SK-N-SH (cell line): ENCODE measurements at regions of chr13 and their contacts with region 1.

Region 1: DNA sequence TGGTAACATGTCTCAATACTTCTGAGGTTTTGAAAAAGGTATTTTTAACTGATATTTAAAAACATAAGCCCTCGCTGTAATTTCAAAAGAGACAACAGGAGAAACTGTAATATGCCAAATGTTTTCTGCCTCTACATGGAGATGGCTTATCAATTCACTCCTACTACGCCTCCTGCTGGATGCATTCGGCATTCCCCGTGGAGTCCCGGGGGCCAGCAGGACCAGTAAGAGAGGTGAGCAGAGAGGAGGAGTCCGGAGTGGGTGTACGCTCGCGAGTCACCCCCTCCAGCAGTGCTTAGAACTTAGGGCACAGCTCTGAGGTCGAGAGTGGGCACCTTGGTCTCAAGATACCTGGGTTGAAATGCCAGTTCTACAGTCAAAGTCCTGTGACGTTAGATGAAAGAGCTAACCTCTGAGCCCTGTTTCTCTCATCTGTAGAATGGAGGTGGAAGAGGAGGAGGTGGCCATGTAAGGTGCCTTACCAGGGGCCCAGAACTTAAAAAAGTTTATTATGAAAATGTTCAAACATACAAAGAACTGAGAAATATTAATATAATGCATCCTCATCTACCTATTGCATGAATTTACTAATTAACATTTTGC is 110.2 kb downstream of the STK24 start:
- DNase-seq: peak; percentile 68
- H3K4me3 ChIP-seq: peak overlapping the region in 1 of 2 experiments; percentile 28; a peak in 1 of 4 replicates
- H3K27ac ChIP-seq: no peak overlapping the region
- H3K4me1 ChIP-seq: peaks cover 0 to 19% of the 10 kb centered on the region in 2 experiments; a peak in 1 of 4 replicates
- H3K27me3 ChIP-seq: no peaks in the 10 kb centered on the region
- CTCF ChIP-seq: peak; percentile 75
- EP300 ChIP-seq: no peak
- RAD21 ChIP-seq: peak; percentile 50

Region 2: GRCh38 chr13:98454389-98454881 is 12.3 kb before region 1 on chr13:
- CTCF ChIA-PET with region 1: interaction called, 27 read pairs
- POLR2A ChIA-PET with region 1: no interaction called
- DNase-seq: no peak
- H3K4me3 ChIP-seq: no peak overlapping the region
- H3K27ac ChIP-seq: peak overlapping the region; percentile 39 to 68
- H3K4me1 ChIP-seq: peaks cover 8 to 17% of the 10 kb centered on the region in 2 experiments; a peak in 2 of 4 replicates
- H3K27me3 ChIP-seq: no peaks in the 10 kb centered on the region
- CTCF ChIP-seq: no peak
- EP300 ChIP-seq: no peak
- RAD21 ChIP-seq: no peak

Region 3: DNA sequence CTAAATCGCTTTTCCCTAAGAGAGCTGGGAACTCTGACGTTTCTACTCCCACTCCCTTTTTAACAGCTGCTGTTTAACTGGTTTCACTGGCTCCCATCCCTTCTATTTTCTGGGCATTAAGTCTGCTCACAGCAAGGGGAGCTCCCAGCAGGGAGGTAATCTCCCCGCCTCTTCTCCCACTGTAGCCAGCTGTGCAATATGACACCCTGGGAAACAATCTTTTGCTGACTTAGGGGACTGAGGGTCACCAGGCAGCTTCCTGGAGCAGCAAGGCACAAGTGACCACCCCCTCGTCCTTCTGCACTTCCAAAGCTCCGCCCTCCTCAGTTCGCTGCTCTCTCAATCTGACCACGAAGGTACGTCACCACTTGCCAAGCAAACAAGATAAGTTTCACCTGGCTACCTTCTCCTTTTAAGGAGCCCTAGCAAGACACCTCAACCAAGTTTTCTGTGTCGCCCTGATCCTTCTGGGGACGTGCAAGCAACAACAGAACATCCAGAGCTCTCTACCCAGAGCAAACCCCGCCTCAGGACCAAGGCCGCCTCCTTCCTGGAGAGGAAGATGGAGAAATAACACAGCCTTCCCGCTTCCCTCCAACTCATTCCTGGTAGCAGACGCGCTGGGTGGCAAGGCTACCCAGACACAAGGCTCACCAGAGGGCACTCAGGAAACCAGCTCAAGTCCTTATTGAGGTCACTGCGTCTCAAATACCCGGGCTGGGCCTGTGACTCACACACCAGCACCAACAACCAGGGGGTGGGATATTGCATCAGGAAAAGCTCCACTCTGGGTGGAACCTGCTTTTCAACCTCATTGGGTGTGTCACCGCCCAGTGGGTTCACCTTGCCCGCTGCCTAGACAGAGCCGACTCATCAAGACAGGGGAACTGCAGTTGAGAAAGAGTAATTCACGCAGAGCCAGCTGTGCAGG is 17.8 kb after region 1 on chr13:
- CTCF ChIA-PET with region 1: interaction called, 12 read pairs
- POLR2A ChIA-PET with region 1: no interaction called
- DNase-seq: no peak
- H3K4me3 ChIP-seq: peak overlapping the region in 1 of 2 experiments; percentile 8; a peak in 1 of 4 replicates
- H3K27ac ChIP-seq: peak overlapping the region; percentile 5 to 87; a peak in 3 of 4 replicates
- H3K4me1 ChIP-seq: peaks cover 34 to 64% of the 10 kb centered on the region in 2 experiments
- H3K27me3 ChIP-seq: no peaks in the 10 kb centered on the region
- CTCF ChIP-seq: 0 out of 2 replicates have a peak, but pooled peaks have one; percentile 14
- EP300 ChIP-seq: no peak
- RAD21 ChIP-seq: no peak

Region 4: GRCh38 chr13:98641075-98641474 is 174.3 kb after region 1 on chr13:
- CTCF ChIA-PET with region 1: no interaction called
- POLR2A ChIA-PET with region 1: no interaction called
- DNase-seq: no peak
- H3K4me3 ChIP-seq: no peak overlapping the region
- H3K27ac ChIP-seq: no peak overlapping the region
- H3K4me1 ChIP-seq: no peaks in the 10 kb centered on the region
- H3K27me3 ChIP-seq: no peaks in the 10 kb centered on the region; the same call in 1 of the 2 replicates
- CTCF ChIP-seq: no peak
- EP300 ChIP-seq: no peak
- RAD21 ChIP-seq: no peak